ENCODE measurements at regions of chr10 and their contacts with region 1.

Region 1: DNA sequence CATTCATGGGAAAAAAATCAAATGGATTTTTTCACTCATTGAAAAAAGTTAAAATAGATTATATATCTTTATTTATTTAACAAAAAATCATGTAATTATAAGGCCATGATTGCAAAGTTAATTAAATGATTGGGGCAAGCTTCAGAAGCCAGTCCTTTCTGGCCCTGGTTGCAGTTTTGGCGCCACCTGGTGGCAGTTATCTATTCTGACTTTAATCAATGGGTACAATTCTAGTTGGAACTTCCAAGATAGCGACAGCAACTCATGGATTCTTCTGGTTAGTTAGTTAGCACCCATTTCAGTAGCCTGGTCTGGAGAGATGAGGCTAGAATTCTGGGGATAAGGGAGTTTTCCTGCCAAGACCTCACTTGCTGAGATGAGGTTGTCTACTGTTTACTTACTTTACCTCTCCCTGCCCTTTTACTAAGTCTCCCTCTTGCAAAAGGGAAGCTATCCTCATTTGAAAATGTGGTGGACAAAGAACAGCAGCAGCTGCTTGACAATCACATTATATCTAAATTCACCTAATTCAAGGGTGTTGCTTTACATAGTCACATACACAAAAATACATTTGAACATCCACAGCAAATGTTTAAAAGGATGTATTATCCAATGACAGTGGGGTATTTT is 42.3 kb downstream of the NOC3L start:
- DNase-seq: peak; percentile 30 to 76 (median 52)
- ATAC-seq: peak; percentile 44
- H3K4me3 ChIP-seq: no peak overlapping the region
- H3K4me3 Mint-ChIP-seq: no peak overlapping the region
- H3K27ac ChIP-seq: no peak overlapping the region
- H3K27ac Mint-ChIP-seq: no peak overlapping the region
- H3K4me1 ChIP-seq: no peaks in the 10 kb centered on the region
- H3K4me1 Mint-ChIP-seq: no peaks in the 10 kb centered on the region
- H3K27me3 ChIP-seq: no peaks in the 10 kb centered on the region
- H3K27me3 Mint-ChIP-seq: no peaks in the 10 kb centered on the region
- CTCF ChIP-seq: peak; percentile 94

Region 2: GRCh38 chr10:93518527-93518926 is 801.9 kb before region 1 on chr10:
- CTCF ChIA-PET with region 1: no interaction called
- POLR2A ChIA-PET with region 1: no interaction called
- intact Hi-C with region 1: no loop called
- DNase-seq: no peak
- ATAC-seq: no peak
- H3K4me3 ChIP-seq: no peak overlapping the region
- H3K4me3 Mint-ChIP-seq: no peak overlapping the region
- H3K27ac ChIP-seq: no peak overlapping the region
- H3K27ac Mint-ChIP-seq: no peak overlapping the region
- H3K4me1 ChIP-seq: no peaks in the 10 kb centered on the region
- H3K4me1 Mint-ChIP-seq: no peaks in the 10 kb centered on the region
- H3K27me3 ChIP-seq: no peaks in the 10 kb centered on the region
- H3K27me3 Mint-ChIP-seq: no peaks in the 10 kb centered on the region
- CTCF ChIP-seq: no peak

Region 3: GRCh38 chr10:93821051-93821772 is 499.2 kb before region 1 on chr10:
- CTCF ChIA-PET with region 1: no interaction called
- POLR2A ChIA-PET with region 1: no interaction called
- intact Hi-C with region 1: loop called (anchors 5 to 10 kb)
- DNase-seq: peak in 3 of 14 experiments; percentile 10 to 19 (median 18)
- ATAC-seq: no peak
- H3K4me3 ChIP-seq: no peak overlapping the region
- H3K4me3 Mint-ChIP-seq: no peak overlapping the region
- H3K27ac ChIP-seq: no peak overlapping the region
- H3K27ac Mint-ChIP-seq: no peak overlapping the region
- H3K4me1 ChIP-seq: no peaks in the 10 kb centered on the region
- H3K4me1 Mint-ChIP-seq: peaks cover 2% of the 10 kb centered on the region
- H3K27me3 ChIP-seq: peaks cover 10 to 13% of the 10 kb centered on the region in 2 experiments
- H3K27me3 Mint-ChIP-seq: peaks cover 28% of the 10 kb centered on the region
- CTCF ChIP-seq: no peak

Region 4: DNA sequence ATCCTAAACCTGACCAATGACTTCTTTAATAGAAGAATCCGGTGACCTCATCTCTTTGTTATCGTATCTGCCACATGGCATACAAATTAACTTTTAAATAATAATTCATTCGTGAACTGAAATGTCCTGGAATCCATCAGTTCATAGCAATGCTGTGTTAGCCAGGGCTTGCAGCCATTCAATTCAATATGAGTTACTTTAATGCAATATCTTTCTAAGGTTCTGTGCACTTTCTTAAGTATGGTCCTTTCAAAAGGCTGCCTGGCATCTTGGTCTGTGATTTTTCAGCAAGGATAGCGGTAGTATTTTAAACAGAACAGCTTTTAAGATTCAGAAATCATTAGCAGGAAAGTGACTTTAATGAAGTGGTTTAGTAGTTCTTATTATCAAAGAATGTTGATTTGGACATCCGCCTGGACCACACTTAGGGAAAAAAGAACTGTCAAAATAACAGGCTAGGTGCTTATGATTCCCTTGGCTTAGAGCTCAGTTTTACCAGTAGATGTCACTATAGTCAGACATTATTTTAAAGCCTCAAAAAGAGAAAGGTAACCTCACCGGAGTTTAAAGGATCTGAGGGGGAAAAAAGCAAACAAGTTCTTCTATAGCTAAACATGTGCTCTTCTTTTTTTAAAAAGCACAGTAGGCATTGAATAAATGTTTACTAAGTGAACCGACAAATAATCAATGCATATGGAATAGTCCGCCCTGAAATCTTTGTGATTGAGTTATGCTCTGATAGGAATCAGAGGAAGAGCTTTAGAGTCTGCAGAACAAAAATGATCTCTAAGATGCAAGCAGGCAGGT is 403.9 kb before region 1 on chr10:
- CTCF ChIA-PET with region 1: no interaction called
- POLR2A ChIA-PET with region 1: no interaction called
- intact Hi-C with region 1: loop called in 1 of 2 experiments (anchors 5 kb)
- DNase-seq: no peak
- ATAC-seq: no peak
- H3K4me3 ChIP-seq: no peak overlapping the region
- H3K4me3 Mint-ChIP-seq: no peak overlapping the region
- H3K27ac ChIP-seq: no peak overlapping the region
- H3K27ac Mint-ChIP-seq: no peak overlapping the region
- H3K4me1 ChIP-seq: no peaks in the 10 kb centered on the region
- H3K4me1 Mint-ChIP-seq: no peaks in the 10 kb centered on the region
- H3K27me3 ChIP-seq: no peaks in the 10 kb centered on the region
- H3K27me3 Mint-ChIP-seq: no peaks in the 10 kb centered on the region
- CTCF ChIP-seq: no peak

Region 5: DNA sequence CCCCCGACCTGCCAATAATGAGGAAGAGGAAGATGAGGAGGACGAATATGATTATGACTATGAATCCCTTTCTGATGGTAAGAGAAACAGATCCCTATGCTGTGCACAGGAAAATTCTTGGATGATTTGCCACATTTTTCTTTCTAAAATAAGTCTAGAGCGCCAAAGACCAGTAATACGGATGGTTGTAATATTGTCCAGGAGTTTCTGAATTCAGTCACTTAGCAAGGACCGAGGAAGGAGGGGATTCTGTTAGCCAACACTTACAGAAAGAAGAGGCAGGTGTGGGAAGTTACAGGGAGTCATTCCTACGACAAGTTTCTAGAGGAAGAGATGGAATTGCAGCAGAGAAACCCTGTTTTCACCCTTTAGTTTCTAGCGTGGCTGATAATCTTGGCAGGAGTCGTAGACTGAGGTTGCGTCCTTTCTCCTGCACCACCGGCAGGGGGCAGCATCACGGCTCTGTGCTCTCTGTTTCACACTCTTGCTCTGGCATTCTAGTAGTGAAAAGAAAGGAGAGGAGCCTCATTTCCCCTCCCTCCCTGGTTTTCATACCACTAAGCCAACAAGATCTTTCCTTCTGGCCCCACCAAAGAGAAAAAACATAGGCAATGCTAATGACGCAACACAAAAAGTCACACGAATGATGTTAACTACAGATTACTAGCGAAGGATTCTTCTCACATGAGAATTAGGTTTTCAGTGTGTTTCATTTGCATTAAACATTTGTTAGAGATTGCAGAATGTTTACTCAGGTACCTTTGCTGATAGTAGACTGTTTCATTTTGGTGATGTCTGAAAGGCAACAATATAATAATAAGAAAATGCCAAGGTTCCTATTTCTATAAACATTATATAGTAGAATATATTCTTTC is 40.3 kb before region 1 on chr10:
- CTCF ChIA-PET with region 1: no interaction called
- POLR2A ChIA-PET with region 1: no interaction called
- intact Hi-C with region 1: loop called in 1 of 2 experiments (anchors 2 kb)
- DNase-seq: peak; percentile 15 to 71 (median 37)
- ATAC-seq: no peak
- H3K4me3 ChIP-seq: no peak overlapping the region
- H3K4me3 Mint-ChIP-seq: no peak overlapping the region
- H3K27ac ChIP-seq: no peak overlapping the region
- H3K27ac Mint-ChIP-seq: no peak overlapping the region
- H3K4me1 ChIP-seq: no peaks in the 10 kb centered on the region
- H3K4me1 Mint-ChIP-seq: no peaks in the 10 kb centered on the region
- H3K27me3 ChIP-seq: peaks cover 0 to 5% of the 10 kb centered on the region in 2 experiments
- H3K27me3 Mint-ChIP-seq: peaks cover 31% of the 10 kb centered on the region
- CTCF ChIP-seq: peak; percentile 84

Region 6: DNA sequence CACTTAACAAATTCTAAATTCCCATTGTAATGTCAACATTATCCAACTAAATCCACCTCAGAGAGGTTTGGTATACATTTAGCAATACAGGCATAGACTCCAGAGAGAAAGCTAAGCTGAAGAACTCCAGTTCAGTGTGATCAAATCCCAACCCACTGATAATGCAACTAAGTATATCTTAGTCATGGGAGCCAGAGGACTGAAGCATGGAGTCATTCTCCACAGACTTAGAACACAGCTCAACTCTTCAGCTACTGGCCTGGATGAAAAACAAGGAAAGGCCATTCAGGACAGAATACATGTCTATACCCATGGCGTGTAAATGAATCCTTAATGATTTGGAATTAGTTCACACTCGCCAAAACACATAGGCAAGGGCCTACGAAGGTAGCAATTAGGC is 14.5 kb after region 1 on chr10:
- CTCF ChIA-PET with region 1: interaction called, 15 read pairs
- POLR2A ChIA-PET with region 1: no interaction called
- intact Hi-C with region 1: no loop called
- DNase-seq: no peak
- ATAC-seq: no peak
- H3K4me3 ChIP-seq: no peak overlapping the region
- H3K4me3 Mint-ChIP-seq: no peak overlapping the region
- H3K27ac ChIP-seq: no peak overlapping the region
- H3K27ac Mint-ChIP-seq: no peak overlapping the region
- H3K4me1 ChIP-seq: no peaks in the 10 kb centered on the region
- H3K4me1 Mint-ChIP-seq: no peaks in the 10 kb centered on the region
- H3K27me3 ChIP-seq: no peaks in the 10 kb centered on the region
- H3K27me3 Mint-ChIP-seq: no peaks in the 10 kb centered on the region
- CTCF ChIP-seq: no peak

Region 7: DNA sequence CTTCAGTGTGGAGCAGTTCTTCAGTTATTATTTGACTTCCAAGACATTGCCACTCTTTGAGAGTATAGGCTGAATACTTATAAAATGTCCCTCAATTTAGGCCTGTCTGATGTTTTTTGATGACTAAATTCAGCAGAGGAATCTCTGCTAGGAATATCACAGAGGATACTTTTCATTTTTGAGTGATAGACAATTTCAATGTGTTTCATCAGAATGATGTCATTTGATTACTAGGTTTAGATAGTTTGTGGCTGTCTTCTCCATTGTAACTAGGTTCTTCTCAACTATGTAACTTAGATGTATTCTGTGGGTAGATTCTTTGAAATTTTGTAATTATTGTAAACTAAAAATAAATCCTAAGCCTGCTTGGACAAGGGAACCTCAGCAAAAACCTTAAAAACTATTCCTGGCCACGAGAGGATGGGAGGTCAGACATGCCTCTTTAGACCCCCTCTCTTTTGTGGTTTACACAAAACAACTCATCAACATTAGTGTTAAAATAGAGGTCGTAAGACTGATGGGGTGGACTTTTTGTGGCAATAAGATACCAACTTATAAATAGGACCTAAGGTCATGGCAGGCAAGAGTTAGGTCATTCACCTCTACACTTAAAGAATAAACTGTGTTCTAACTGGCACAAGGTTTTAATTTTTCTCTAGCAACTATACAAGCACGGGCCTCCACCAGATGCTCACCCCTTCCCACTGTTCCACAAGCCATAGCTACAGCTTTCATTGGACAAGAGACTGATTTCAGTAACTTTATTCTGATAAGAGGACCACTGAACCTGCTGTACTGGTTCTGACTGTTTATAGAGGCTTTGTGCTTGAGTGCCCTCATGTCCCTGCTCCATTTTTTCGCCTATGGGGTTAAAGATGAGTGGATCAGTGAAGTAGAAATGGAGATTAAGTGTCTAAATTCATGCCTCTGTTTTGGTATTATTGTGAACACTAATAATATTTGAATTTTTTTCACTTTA is 715.2 kb after region 1 on chr10:
- CTCF ChIA-PET with region 1: no interaction called
- POLR2A ChIA-PET with region 1: no interaction called
- intact Hi-C with region 1: no loop called
- DNase-seq: no peak
- ATAC-seq: no peak
- H3K4me3 ChIP-seq: no peak overlapping the region
- H3K4me3 Mint-ChIP-seq: no peak overlapping the region
- H3K27ac ChIP-seq: no peak overlapping the region
- H3K27ac Mint-ChIP-seq: no peak overlapping the region
- H3K4me1 ChIP-seq: no peaks in the 10 kb centered on the region
- H3K4me1 Mint-ChIP-seq: no peaks in the 10 kb centered on the region
- H3K27me3 ChIP-seq: no peaks in the 10 kb centered on the region
- H3K27me3 Mint-ChIP-seq: no peaks in the 10 kb centered on the region
- CTCF ChIP-seq: no peak

Measured in CD4-positive, alpha-beta T cell (primary cell).